ENCODE measurements at regions of chr5 and their contacts with region 1.

Region 1: DNA sequence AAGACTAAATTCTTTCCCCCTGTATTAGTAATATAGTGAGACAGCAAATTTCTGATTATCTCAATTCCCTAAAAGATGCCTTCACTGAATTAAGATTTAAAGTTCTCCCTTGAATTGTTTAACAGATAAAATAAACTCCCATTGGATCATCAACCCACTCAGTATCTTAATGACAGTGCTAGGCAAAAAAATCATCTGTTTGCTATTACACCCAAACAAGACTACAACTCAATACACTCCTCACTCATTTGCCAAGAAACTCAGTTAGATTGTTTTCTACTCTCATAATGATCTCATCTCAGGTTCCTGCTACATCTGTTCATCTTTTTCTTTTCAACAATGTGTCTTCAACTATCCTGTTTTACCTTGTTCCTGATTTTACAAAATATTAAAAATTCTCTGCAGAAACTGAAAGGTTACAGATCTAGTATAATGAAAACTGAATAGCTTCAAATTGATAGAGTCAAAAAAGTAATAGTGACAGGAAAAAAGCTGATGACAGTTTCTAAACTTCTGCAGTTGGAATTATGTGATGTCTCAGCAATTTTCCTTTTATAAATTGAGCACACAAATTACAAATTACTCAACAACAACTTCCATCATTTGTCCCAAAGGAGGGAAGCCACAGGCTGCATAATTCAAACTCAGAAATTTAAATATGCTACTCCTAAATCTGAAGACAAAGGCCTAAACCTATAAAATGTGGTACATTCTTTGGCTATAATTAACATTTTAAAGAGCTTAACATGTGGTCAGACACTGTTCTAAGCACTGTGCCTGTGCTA is 39.4 kb downstream of the HOMER1 start:
- DNase-seq: no peak
- ATAC-seq: no peak
- H3K4me3 ChIP-seq: no peak overlapping the region
- H3K27ac ChIP-seq: no peak overlapping the region
- H3K4me1 ChIP-seq: peaks cover 61% of the 10 kb centered on the region
- H3K27me3 ChIP-seq: no peaks in the 10 kb centered on the region
- CTCF ChIP-seq: no peak

Region 2: DNA sequence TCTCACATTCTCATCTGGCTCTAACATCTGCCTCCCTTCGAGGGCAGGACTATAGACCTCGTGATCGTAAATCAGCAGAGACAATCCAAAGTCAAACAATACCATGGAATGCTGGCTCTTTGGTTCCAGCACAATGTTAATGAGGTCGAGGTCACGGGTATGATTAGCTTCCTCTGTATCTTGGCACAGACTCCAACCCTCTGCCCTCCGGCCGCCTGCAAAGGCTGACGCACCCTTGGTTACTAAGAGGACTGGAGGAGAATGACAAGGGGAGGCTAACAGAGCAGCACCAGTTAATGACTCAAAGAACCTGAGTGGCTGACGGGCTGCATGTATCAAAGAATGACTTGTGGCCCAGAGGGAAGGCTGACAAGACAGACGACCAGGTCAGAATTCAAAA is 836.1 kb before region 1 on chr5:
- intact Hi-C with region 1: no loop called
- DNase-seq: peak; percentile 58 to 70
- ATAC-seq: peak; percentile 72 to 91 (median 90)
- H3K4me3 ChIP-seq: no peak overlapping the region
- H3K27ac ChIP-seq: no peak overlapping the region
- H3K4me1 ChIP-seq: peaks cover 25% of the 10 kb centered on the region
- H3K27me3 ChIP-seq: no peaks in the 10 kb centered on the region
- CTCF ChIP-seq: no peak

Region 3: DNA sequence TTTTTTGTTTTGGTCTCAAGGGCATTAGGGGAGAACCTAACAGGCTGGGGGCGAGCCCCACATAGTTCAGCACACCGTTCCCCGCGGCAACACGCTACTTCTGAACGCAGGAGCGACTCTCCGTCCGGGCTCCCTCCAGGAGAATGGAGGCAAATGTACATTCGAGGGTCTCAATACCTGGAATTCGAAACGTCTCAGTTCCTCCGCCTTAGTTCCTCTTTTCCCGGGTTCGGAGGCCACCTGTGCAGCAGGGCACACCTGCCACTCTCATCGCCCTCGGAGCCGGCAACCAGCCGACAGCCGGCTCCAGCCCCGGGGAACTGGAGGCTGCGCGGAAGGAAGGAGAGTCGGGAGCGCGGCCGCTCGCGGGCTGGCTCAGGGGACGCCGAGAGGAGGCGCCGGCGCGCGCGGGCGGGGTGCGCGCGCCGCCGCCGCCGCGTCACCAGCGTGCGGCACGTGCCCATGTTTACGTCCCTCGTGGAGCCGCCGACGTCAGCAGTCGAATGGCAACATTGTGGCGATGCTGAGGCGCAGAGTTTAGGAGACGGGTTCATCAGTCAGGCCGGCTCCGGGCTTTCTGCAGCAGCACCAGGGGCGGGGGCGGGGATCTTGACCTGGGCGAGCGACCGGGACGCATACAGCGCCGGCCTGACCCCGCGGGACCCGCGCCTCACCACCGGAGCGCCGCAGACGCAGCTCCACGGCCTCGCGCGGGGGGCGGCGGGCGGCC is 238.8 kb before region 1 on chr5 and contains the start of gene JMY:
- intact Hi-C with region 1: loop called in 1 of 2 experiments (anchors 10 kb)
- DNase-seq: peak; percentile 87 to 93
- ATAC-seq: peak; percentile 88 to 93 (median 92)
- H3K4me3 ChIP-seq: peak within 1 kb of the TSS; percentile 94
- H3K27ac ChIP-seq: peak within 1 kb of the TSS; percentile 91
- H3K4me1 ChIP-seq: peaks cover 7% of the 10 kb centered on the region
- H3K27me3 ChIP-seq: no peaks in the 10 kb centered on the region
- CTCF ChIP-seq: peak; percentile 16
- total RNA-seq, gene JMY: 11.7 to 17.0 (median 14.8) TPM

Measured in psoas muscle (tissue), 8 donors.